Psoas muscle (tissue), 8 donors: ENCODE measurements at regions of chr11 and their contacts with region 1.

Region 1: DNA sequence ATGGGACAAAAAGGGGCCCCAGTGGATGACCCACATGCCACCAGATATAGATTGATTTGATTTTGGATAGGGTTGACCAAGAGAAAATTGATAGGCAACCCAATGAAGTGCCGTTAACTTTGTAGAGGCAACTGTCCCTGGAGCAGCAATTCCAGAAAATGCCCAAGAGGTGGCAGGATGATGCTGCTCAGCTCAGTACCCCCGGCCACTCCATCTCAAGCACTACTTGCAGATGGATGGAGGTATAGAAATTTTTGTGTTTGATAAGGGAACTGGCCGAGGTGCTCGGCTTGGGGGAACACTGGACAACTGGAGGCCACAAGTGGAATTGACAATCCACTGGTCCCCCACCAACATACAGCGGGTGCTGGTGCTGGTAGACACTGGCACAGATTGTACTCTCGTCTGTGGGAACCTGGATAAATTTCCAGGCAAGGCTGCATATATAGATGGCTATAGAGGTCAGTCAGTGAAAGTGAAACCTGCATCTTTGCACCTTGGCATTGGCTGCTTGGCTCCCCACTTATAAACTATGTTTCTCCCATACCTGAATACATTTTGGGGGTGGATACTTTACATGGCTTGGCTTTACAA is 86.3 kb downstream of the CCDC83 start:
- DNase-seq: peak; percentile 41 to 52
- ATAC-seq: peak; percentile 77 to 89 (median 84)
- H3K4me3 ChIP-seq: no peak overlapping the region
- H3K27ac ChIP-seq: no peak overlapping the region
- H3K4me1 ChIP-seq: no peaks in the 10 kb centered on the region
- H3K27me3 ChIP-seq: no peaks in the 10 kb centered on the region
- CTCF ChIP-seq: peak; percentile 72

Region 2: DNA sequence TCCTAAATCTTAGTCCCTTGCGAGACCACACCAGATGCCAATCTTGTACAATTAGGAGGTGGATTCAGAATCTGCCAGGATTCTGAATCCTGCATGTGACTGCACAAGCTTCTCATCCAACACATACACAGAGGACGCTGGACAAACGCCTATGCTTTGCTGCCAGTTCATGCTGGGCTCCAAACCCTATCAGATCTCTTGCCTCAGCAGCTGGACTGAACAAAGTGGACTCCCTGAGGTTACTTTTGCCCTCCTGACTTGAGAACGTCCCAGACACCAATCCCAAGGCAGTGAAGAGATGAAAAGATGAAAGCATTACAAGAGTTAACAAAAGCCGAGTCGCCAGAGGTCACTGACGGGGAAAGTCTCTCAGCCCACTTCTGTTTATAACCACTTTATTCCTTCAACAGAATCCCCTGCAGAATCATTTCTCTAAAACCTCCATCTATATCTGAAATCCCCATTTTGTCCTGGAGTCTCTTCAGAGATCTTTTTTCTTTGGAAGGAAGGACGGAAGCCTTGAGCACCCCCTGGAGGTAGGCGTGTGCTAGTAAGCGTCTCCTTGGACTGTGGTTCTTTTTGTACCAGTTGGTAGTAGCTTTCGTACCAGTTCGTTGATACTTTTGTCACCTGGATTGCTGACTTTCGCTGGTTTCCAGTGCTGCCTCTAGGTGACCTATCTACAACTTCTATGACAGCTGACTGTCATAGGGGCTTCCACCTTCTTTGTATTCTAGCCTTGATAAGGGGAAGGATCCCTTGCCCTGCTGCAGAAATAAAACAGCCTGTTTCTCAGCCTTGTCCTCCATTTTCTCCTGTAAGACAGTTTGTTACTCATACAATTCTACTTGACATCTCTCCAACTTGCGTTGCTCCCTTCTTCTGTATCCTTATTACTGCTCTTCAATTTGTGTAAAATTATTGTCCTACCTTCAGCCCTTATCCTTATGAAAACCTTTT is 276.9 kb after region 1 on chr11:
- intact Hi-C with region 1: loop called (anchors 2 kb)
- DNase-seq: peak; percentile 56 to 76
- ATAC-seq: peak; percentile 84 to 99 (median 94)
- H3K4me3 ChIP-seq: peak overlapping the region; percentile 40
- H3K27ac ChIP-seq: no peak overlapping the region
- H3K4me1 ChIP-seq: no peaks in the 10 kb centered on the region
- H3K27me3 ChIP-seq: no peaks in the 10 kb centered on the region
- CTCF ChIP-seq: peak; percentile 94

Region 3: GRCh38 chr11:86291466-86292262 is 350.2 kb after region 1 on chr11:
- intact Hi-C with region 1: loop called in 1 of 2 experiments (anchors 5 kb)
- DNase-seq: no peak
- ATAC-seq: peak; percentile 55 to 67 (median 65)
- H3K4me3 ChIP-seq: no peak overlapping the region
- H3K27ac ChIP-seq: no peak overlapping the region
- H3K4me1 ChIP-seq: no peaks in the 10 kb centered on the region
- H3K27me3 ChIP-seq: no peaks in the 10 kb centered on the region
- CTCF ChIP-seq: peak; percentile 53